ENCODE measurements at regions of chr11 and their contacts with region 1.

Region 1: GRCh38 chr11:65576867-65577769 is 1.3 kb downstream of the EHBP1L1 start:
- H3K4me3 Mint-ChIP-seq: peak overlapping the region; percentile 92
- H3K27ac Mint-ChIP-seq: peak overlapping the region; percentile 90
- H3K4me1 Mint-ChIP-seq: peaks cover 69% of the 10 kb centered on the region
- H3K27me3 Mint-ChIP-seq: no peaks in the 10 kb centered on the region

Region 2: GRCh38 chr11:65506770-65507505 is 70.2 kb before region 1 on chr11:
- intact Hi-C with region 1: no loop called
- H3K4me3 Mint-ChIP-seq: no peak overlapping the region
- H3K27ac Mint-ChIP-seq: no peak overlapping the region
- H3K4me1 Mint-ChIP-seq: peaks cover 63% of the 10 kb centered on the region
- H3K27me3 Mint-ChIP-seq: no peaks in the 10 kb centered on the region

Region 3: DNA sequence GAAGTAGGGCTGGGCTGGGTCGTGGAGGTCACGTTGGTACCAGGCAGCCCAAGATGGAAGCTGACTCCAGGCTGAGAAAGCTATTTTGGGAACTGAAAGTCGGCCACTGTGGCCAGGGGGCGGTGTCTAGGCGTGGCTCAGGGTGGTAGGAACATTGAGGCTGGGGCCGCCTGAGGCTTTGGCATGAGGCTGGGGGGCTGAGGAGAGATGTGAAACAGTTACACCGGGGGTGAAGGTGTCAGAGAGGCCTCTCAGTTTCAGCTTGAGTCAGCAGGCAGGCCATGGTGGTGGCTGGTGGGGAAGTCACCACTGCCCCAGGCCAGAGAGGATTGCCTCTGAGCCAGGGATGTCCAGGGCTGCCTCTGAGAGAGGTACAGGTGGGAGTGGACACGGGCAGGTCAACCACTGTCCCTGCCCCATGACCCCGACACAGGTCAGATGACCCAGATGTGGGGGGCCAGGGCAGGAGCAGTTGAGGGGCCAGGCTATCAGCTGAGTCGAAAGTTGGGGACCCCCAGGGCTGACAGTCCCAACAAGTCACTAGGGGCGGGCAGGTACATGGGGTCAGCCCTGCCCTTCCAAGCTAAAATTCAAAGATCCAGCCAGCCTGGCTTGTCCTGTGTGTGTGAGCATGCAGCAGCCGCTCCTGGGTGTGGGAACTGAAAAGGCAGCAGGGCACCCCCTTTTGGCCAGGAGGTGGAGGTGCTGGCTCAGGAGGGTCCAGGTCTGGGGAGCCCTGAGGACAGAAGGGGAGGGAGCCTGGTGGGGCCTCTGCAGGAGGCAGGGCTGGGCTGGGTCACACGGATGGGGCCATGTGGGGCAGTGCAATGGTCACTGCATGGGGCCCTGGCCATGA is 11.3 kb after region 1 on chr11:
- intact Hi-C with region 1: loop called (anchors 1 kb)
- H3K4me3 Mint-ChIP-seq: peak overlapping the region; percentile 79
- H3K27ac Mint-ChIP-seq: peak overlapping the region; percentile 95
- H3K4me1 Mint-ChIP-seq: peaks cover 80% of the 10 kb centered on the region
- H3K27me3 Mint-ChIP-seq: no peaks in the 10 kb centered on the region

Region 4: DNA sequence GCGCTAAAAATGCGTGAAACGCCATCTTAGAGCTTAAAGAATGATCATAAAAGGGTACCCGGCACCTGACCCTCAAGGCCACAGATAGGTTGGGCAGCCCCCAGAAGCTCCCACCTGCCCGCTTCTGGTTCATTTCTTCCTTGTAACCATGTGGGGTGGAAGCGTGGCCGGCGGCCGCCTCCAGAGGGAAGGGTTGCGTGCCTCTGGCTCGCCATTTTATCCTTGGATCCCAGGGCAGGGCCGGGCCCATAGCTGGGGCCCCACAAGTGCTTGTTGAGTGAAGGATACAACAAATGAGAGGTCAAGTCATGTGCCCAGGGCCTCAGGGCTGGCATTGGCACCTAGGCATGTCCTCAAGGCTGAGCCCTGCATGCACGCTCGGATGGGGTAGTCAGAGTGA is 44.3 kb after region 1 on chr11:
- intact Hi-C with region 1: no loop called
- H3K4me3 Mint-ChIP-seq: no peak overlapping the region
- H3K27ac Mint-ChIP-seq: no peak overlapping the region
- H3K4me1 Mint-ChIP-seq: peaks cover 28% of the 10 kb centered on the region
- H3K27me3 Mint-ChIP-seq: no peaks in the 10 kb centered on the region

Region 5: GRCh38 chr11:65873318-65874156 is 296.4 kb after region 1 on chr11:
- intact Hi-C with region 1: no loop called
- H3K4me3 Mint-ChIP-seq: peak overlapping the region; percentile 96
- H3K27ac Mint-ChIP-seq: peak overlapping the region; percentile 95
- H3K4me1 Mint-ChIP-seq: peaks cover 59% of the 10 kb centered on the region
- H3K27me3 Mint-ChIP-seq: peaks cover 25% of the 10 kb centered on the region

Measured in dendritic cell treated with granulocyte-macrophage colony-stimulating factor and Interleukin-4, amounts not matched to agents 40 ng/mL and 50 ng/mL, for 4 days (primary cell).